Activated naive CD8-positive, alpha-beta T cell treated with anti-CD3 and anti-CD28 coated beads, Interleukin-2, amount 10 ng/mL, durations not matched to agents 7 days and 5 days (primary cell): ENCODE measurements at regions of chrX and their contacts with region 1.

Region 1: GRCh38 chrX:48521353-48522243 is at the start of gene EBP:
- DNase-seq: peak; percentile 92
- ATAC-seq: peak; percentile 92
- H3K4me3 Mint-ChIP-seq: peak within 1 kb of the TSS; percentile 92
- H3K27ac Mint-ChIP-seq: peak within 1 kb of the TSS; percentile 98
- H3K4me1 Mint-ChIP-seq: peaks cover 30% of the 10 kb centered on the region
- H3K27me3 Mint-ChIP-seq: no peaks in the 10 kb centered on the region
- total RNA-seq, gene EBP: 200 to 214 TPM

Region 2: GRCh38 chrX:48474127-48474526 is 47.5 kb before region 1 on chrX:
- POLR2A ChIA-PET with region 1: interaction called, 11 read pairs
- DNase-seq: no peak
- ATAC-seq: no peak
- H3K4me3 Mint-ChIP-seq: peak overlapping the region; percentile 25
- H3K27ac Mint-ChIP-seq: peak overlapping the region; percentile 54
- H3K4me1 Mint-ChIP-seq: peaks cover 33% of the 10 kb centered on the region
- H3K27me3 Mint-ChIP-seq: no peaks in the 10 kb centered on the region

Region 3: GRCh38 chrX:48539345-48540027 is 17.9 kb after region 1 on chrX and contains the start of gene TBC1D25:
- POLR2A ChIA-PET with region 1: interaction called, 20 read pairs
- DNase-seq: peak; percentile 92
- ATAC-seq: peak; percentile 82
- H3K4me3 Mint-ChIP-seq: peak within 1 kb of the TSS; percentile 93
- H3K27ac Mint-ChIP-seq: peak within 1 kb of the TSS; percentile 98
- H3K4me1 Mint-ChIP-seq: peaks cover 17% of the 10 kb centered on the region
- H3K27me3 Mint-ChIP-seq: no peaks in the 10 kb centered on the region
- total RNA-seq, gene TBC1D25: 22.5 to 22.6 TPM

Region 4: DNA sequence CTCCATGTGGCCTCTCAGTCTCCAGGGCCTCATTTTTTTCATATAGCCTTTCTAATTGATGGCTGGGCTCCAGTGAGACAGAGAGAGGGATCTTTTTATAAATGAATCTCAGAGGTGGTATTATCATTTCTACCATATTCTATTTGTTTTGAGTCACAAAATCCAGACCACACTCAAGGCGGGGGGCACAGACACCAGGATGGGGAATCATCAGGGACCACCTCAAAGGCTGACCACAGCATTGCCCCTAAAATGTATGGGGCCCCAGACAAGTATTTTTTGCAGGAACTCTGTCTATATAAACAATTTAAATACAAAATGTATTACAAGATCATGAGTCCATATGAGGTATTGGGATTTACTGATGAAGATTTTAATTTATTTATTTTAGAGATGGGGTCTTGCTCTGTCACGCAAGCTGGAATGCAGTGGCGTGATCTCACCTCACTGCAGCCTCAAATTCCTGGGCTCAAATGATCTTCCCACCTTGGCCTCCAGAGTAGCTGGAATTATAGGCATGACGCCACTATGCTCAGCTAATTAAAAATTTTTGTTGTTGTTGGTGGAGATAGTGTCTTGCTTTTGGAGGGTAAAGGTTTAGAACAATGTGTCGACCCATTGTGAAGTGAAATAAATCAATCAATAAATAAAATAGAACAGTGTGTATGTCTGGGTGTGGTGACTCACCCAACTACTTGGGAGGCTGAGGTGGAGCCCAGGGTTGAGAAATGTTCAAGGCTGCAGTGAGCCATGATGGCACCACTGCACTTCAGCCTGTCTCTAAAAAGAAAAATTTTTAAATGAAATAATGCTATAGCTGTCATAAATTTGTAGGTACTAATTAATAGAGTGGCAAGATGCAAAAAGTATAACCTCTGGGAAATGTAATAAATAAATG is 105.1 kb after region 1 on chrX:
- POLR2A ChIA-PET with region 1: no interaction called
- DNase-seq: no peak
- ATAC-seq: no peak
- H3K4me3 Mint-ChIP-seq: no peak overlapping the region
- H3K27ac Mint-ChIP-seq: no peak overlapping the region
- H3K4me1 Mint-ChIP-seq: no peaks in the 10 kb centered on the region
- H3K27me3 Mint-ChIP-seq: no peaks in the 10 kb centered on the region